ENCODE measurements at regions of chr11 and their contacts with region 1.

Region 1: GRCh38 chr11:65111744-65112414 is at the start of gene TM7SF2:
- DNase-seq: peak; percentile 98
- CTCF ChIP-seq: no peak

Region 2: DNA sequence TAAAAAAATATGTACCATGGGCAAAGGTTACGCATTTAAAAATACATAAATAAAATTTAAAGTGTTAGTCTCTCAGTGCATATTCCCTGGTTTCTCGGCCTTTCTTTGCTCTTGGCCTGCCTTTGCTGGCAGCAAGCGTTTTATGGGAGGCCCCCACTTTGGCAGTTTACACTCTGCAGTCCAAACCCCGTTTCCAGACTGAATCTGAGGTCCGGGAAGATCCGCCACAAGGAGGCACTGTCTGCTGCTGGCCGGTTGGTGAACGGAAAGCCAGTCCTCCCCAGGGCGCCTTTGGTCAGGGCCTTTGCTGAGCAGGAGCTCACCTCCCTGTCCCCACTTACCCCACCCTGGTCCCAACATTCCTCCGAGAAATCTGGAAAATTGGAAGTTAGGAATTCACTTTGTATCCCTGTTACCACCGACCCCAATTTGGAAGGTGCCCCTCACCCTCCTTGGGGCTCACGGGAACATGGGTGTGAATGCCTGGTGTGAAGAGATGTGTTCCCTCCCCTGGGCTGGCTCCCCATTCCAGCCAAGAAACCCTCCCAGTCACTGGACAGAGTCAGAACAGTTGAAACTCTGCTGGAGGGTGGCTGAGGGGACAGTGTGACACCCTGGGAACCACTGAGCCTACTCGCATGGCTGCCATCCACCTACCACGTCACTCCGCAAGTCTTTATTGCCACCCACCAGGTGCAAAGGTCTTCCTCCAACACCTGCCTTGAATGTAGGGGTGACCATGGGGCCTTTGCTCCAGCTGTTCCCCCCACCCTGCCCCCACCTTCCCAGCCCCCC is 324.2 kb before region 1 on chr11:
- CTCF ChIA-PET with region 1: interaction called, 13 read pairs
- POLR2A ChIA-PET with region 1: no interaction called
- DNase-seq: peak; percentile 76
- CTCF ChIP-seq: peak; percentile 74

Region 3: DNA sequence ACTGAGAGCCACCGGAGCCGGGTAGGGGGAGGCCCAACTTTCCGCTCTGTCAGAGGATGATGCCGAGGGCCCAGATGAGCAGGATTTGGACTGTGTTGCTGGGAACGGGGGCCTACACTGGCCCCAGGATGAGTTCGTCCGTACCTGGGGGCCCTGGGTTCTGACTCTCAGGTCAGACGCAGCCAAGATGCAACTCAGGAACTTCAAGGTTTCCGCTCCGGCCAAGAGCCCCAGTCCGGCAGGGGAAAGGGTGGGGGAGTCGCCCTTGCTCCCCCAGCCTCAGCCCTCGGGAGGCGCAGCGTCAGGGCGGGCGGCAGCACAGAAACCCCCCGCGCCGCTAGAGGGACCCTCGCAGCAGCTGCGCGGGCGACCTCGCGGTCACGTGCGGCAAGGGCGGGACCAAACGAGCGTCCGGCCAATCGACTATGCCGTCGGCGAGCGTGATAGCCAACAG is 98.2 kb before region 1 on chr11:
- CTCF ChIA-PET with region 1: interaction called, 73 read pairs
- POLR2A ChIA-PET with region 1: interaction called, 7 read pairs
- DNase-seq: peak; percentile 96
- CTCF ChIP-seq: peak; percentile 76

Region 4: GRCh38 chr11:65040847-65041621 is 70.8 kb before region 1 on chr11 and contains the start of gene SAC3D1:
- CTCF ChIA-PET with region 1: interaction called, 12 read pairs
- POLR2A ChIA-PET with region 1: no interaction called
- DNase-seq: peak; percentile 96
- CTCF ChIP-seq: no peak

Region 5: DNA sequence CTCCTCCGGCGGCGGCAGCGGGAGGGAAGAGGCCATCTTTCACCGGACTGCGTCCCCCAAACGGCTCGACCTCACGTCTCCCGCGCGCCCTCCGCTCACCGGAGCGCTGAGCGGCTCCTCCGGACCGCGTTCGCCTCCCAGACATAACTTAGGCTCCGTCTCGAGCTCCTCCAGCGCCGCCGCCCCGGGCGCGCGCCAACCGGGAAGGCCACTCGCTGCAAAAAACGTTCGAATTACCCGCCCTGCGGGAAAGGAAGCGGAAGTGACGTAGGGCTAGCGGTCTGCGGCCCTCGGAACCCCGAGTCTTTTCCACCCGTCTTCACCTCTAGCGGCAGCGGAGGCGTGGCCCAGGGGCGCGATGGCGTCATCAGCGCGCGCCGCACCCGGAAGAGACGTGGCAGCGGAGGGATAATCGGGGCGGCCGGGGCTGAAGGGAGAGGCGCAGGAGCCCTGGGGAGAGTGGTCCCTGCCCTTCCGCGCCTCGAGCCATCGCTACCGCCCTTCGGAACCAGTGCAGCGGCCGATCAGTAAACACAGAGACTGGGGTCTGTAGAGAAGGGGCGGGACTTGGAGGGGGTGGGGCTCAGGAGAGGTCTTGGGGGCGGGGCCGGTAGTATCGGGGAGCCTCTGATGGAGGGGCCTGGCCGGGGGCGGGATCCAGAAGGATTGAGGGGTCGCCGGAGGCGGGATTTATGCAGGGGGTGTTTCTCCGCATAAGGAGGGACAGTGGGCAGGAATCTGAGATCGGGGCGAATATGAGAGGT is 27.9 kb before region 1 on chr11 and contains the starts of genes CDCA5 and ZFPL1:
- CTCF ChIA-PET with region 1: interaction called, 22 read pairs
- POLR2A ChIA-PET with region 1: interaction called, 3 read pairs
- DNase-seq: peak; percentile 99
- CTCF ChIP-seq: no peak

Region 6: GRCh38 chr11:65095974-65096806 is 15.7 kb before region 1 on chr11 and contains the start of gene VPS51:
- CTCF ChIA-PET with region 1: interaction called, 165 read pairs
- POLR2A ChIA-PET with region 1: interaction called, 14 read pairs
- DNase-seq: peak; percentile 90
- CTCF ChIP-seq: no peak

Region 7: GRCh38 chr11:65180877-65181568 is 69.1 kb after region 1 on chr11:
- CTCF ChIA-PET with region 1: interaction called, 48 read pairs
- POLR2A ChIA-PET with region 1: no interaction called
- DNase-seq: peak; percentile 78
- CTCF ChIP-seq: peak; percentile 80

Region 8: GRCh38 chr11:65212226-65212801 is 100.4 kb after region 1 on chr11:
- CTCF ChIA-PET with region 1: no interaction called
- POLR2A ChIA-PET with region 1: no interaction called
- DNase-seq: no peak
- CTCF ChIP-seq: no peak